GM23248 (cell line): ENCODE measurements at regions of chr4 and their contacts with region 1.

Region 1: DNA sequence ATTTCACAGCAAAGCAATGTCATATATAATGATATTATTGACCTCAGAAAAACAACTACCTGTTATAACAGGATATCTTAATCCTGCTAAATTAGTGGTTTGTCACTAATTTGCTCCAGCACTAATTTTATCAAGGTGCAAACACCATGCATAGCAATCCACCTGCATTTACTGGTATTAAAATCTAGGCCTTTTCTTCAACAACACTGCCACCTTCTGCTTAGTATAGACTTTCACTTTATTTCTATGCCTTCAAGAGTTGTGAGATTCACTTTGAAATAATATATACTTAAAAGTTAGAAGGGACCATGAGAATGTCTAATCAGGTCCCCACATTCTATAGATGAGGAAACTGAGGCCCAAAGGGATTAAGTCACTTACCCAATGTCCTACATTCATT is 82.1 kb upstream of the IQCM start:
- DNase-seq: peak; percentile 51
- H3K4me3 ChIP-seq: no peak overlapping the region
- H3K27ac ChIP-seq: no peak overlapping the region
- H3K4me1 ChIP-seq: no peaks in the 10 kb centered on the region
- H3K27me3 ChIP-seq: no peaks in the 10 kb centered on the region

Region 2: DNA sequence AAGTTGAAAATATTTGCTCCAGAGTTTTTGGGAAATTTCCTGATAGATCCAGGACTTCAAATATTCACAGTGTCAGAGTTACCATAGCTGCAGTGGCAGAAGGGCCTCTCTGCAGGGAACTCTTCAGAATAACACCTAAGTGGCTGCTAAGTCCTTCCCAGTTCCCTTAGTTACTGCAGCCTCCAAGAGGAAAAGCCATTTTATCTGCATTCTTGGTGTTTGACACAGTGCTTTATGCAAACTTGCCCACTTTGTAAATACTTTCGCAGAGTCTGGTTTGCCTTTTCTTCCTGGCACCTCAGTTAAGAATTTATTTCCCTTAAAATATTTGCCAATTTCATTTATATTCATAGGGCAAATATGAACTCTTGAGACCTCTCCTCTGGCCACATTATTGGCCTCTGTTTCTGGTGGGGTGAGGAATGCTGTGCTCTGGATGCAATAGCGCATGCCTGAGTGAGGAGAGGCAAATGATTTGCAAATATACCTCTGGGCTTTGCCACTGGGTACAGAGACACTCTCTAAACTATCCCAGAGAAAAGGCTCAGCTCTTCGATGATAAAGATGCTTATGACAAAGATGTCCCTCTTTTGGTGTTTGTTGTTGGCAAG is 889.3 kb before region 1 on chr4:
- in situ Hi-C with region 1: loop called (anchors 25 kb)
- DNase-seq: no peak
- H3K4me3 ChIP-seq: no peak overlapping the region
- H3K27ac ChIP-seq: no peak overlapping the region
- H3K4me1 ChIP-seq: no peaks in the 10 kb centered on the region
- H3K27me3 ChIP-seq: no peaks in the 10 kb centered on the region